Activated CD4-positive, alpha-beta T cell treated with anti-CD3 and anti-CD28 coated beads, Interleukin-2, amount 10 ng/mL, durations not matched to agents 24 days and 14 days (primary cell): ENCODE measurements at regions of chr12 and their contacts with region 1.

Region 1: DNA sequence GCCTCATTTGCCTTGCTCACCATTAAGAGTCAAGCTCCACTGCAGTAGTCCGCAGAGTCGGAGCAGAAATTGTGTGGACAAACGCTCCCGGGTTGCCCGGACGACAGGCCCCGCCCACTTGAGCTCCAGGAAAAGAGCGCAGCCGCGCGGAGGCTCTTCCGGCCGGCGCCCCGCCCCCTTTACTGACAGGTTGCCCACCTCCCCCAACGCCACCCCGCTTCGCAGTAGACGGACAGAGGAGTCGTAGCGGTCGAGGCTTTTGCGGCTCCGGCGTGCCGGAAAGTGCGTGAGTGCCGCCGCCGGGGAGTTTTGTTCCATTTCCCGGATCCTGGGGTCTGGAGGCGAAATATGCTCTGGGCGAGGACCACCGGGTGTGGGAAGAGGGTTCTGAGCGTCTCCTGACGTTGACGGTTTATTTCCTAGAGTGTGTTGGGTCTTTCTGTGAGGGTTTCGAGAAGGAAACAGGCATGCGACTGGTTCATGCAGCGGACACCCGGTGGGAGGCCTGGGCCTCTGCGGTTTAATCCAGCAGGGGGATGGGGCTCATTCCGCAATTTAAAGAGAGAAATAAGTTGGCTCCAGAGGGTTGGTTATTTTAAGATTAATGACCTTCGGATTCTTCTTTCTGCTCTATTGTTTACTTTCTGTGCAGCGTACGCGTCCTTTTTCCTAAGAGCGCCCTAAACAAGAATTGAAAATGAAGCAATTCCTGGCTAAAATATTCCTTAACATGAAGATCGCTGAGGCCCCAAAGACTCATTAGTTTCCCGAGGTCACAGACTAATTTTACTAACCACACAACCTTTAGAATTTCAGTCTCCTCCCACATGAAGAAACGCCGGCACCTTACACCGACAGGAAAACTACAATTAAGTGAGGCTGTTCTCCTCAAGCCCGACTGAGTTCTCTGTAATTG is at the starts of genes DNAI7 and ETFRF1:
- DNase-seq: peak; percentile 98
- H3K4me3 Mint-ChIP-seq: peak within 1 kb of the TSS; percentile 94
- H3K27ac Mint-ChIP-seq: peak within 1 kb of the TSS; percentile 93
- H3K4me1 Mint-ChIP-seq: peaks cover 23% of the 10 kb centered on the region
- H3K27me3 Mint-ChIP-seq: no peaks in the 10 kb centered on the region
- total RNA-seq, gene DNAI7: not detected in 2 replicates
- total RNA-seq, gene ETFRF1: 9.9 TPM in 2 replicates

Region 2: DNA sequence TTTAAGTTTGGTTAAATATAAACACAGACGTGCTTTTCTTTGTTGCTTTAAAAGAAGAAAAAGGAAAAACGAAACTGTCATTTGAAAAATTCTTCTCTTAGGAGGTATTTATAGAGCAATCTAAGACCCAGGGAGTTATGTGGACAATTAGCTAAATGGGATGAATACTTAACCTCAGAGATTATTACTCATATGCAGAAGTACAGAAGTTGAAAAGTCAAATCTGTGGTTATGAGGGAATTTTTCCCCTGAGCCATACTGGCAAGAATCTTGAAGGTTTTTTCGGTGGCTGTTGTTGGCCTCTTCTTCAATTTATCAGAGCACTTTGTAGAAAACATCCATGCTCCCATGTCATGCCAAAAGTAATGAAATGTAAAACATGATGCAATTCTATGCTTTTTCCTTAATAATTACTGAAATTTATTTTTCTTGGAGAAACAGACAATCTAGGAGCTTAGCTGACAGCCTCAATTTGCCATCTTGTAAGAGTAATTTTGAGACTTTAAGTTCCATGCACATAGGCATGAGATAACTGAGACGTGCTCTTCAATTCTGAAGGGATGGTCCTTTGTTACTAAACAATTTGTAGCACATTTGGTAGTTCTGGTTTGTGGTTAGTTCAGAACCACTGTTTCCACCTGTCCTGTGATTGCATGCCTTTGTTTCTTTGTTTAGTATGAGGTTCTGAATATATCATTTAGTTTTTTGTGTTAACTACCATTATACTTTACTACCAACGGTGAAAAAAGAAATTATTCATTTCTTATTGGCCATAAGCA is 373.0 kb before region 1 on chr12:
- intact Hi-C with region 1: no loop called
- DNase-seq: no peak
- H3K4me3 Mint-ChIP-seq: peak overlapping the region; percentile 32
- H3K27ac Mint-ChIP-seq: peak overlapping the region; percentile 34
- H3K4me1 Mint-ChIP-seq: peaks cover 24% of the 10 kb centered on the region
- H3K27me3 Mint-ChIP-seq: no peaks in the 10 kb centered on the region

Region 3: GRCh38 chr12:25250744-25251730 is 55.7 kb after region 1 on chr12 and contains the start of gene KRAS:
- intact Hi-C with region 1: loop called (anchors 1 kb)
- DNase-seq: peak; percentile 97
- H3K4me3 Mint-ChIP-seq: peak within 1 kb of the TSS; percentile 86
- H3K27ac Mint-ChIP-seq: peak within 1 kb of the TSS; percentile 94
- H3K4me1 Mint-ChIP-seq: peaks cover 27% of the 10 kb centered on the region
- H3K27me3 Mint-ChIP-seq: peaks cover 13% of the 10 kb centered on the region
- total RNA-seq, gene KRAS: 26.4 and 27.4 TPM in 2 replicates

Region 4: DNA sequence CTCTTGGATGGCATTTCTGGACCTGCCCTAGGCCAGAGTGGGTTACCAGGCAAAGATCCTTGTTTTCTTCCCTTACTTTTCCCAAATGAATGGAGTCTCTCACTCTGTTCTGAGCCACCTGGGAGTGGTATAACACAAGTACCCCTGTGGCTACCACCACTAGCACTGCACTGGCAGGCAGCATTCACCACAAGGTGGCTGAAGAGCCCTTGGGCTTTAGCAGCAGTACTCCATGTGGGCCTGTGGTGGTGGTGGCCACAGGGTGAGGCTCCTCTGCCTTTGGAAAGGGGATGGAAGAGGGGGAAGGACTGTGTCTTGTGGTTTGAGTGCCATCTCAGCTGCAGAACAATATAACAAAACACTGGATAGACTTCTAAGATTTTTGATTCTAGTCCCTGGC is 395.8 kb after region 1 on chr12:
- intact Hi-C with region 1: loop called (anchors 10 kb)
- DNase-seq: no peak
- H3K4me3 Mint-ChIP-seq: no peak overlapping the region
- H3K27ac Mint-ChIP-seq: no peak overlapping the region
- H3K4me1 Mint-ChIP-seq: peaks cover 49% of the 10 kb centered on the region
- H3K27me3 Mint-ChIP-seq: no peaks in the 10 kb centered on the region